Activated T-helper 1 cell treated with anti-CD3 and anti-CD28 coated beads, Interleukin-12 subunit alpha, Interleukin-12 subunit beta, Interleukin-2, Interleukin-4 antibody, amounts not matched to agents 30 ng/mL and 10 ng/mL and 1 ng/mL, durations not matched to agents 14 hours and 24 hours and 36 hours (primary cell): ENCODE measurements at regions of chr2 and their contacts with region 1.

Region 1: GRCh38 chr2:196131384-196131937 is 39.9 kb downstream of the STK17B start:
- DNase-seq: peak; percentile 41
- H3K4me3 Mint-ChIP-seq: no peak overlapping the region
- H3K27ac Mint-ChIP-seq: peak overlapping the region; percentile 78
- H3K4me1 Mint-ChIP-seq: peaks cover 31% of the 10 kb centered on the region
- H3K27me3 Mint-ChIP-seq: peaks cover 3% of the 10 kb centered on the region

Region 2: GRCh38 chr2:196059491-196059960 is 71.9 kb before region 1 on chr2:
- intact Hi-C with region 1: no loop called
- DNase-seq: no peak
- H3K4me3 Mint-ChIP-seq: no peak overlapping the region
- H3K27ac Mint-ChIP-seq: no peak overlapping the region
- H3K4me1 Mint-ChIP-seq: no peaks in the 10 kb centered on the region
- H3K27me3 Mint-ChIP-seq: peaks cover 5% of the 10 kb centered on the region

Region 3: DNA sequence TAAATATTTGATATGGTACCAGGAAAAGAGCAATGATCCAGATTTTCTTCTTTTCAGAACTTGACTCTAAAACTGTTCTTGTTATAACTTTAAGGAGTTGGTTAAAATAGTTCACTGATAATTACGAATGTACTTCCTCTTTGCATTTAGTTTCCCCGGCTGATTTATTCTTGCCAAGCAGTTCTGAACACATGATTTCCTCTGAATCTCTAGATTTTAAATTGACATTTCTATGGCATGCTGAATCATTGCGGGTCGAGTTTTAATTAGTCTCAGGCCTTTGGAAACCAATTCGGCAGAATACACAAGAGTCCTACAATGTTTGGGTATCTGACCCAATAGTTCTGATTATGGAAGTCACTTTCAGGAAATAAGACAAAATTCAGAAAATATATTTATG is 25.5 kb before region 1 on chr2:
- intact Hi-C with region 1: no loop called
- DNase-seq: no peak
- H3K4me3 Mint-ChIP-seq: no peak overlapping the region
- H3K27ac Mint-ChIP-seq: no peak overlapping the region
- H3K4me1 Mint-ChIP-seq: peaks cover 26% of the 10 kb centered on the region
- H3K27me3 Mint-ChIP-seq: peaks cover 2% of the 10 kb centered on the region

Region 4: DNA sequence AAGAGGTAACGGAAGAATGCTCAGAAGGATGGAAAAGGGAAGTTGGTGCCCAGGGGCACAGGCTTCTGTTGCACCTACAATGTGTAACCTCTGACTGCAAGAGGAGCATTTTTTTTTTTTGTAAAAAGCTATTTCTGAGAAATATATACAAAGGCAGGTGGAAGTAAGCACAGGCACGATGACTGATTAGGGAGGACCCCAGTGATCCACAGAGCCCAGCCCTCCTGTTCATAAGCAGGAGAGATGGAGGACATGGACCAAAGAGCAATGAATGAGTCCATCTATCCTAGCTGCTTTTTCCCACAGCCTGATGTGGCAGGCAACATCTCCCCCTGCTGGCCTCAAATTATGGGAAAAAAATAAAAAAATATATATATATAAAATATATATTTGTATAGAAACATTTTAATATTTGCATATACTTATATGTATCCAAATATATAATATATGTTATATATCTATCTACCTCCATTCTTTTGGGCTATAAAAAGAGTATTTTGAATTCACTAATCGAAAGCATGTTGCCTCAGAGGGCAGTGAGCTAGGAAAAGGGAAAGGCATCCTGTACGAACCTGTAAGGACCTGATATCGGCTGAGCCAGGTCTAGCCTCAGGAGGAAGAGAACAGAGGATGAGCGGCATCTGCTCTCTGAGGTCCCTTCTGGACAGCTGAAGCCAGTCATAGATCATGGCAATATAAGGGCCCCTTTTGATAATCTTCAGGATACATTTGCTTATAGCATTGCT is 205.9 kb after region 1 on chr2:
- intact Hi-C with region 1: loop called (anchors 1 kb)
- DNase-seq: no peak
- H3K4me3 Mint-ChIP-seq: no peak overlapping the region
- H3K27ac Mint-ChIP-seq: no peak overlapping the region
- H3K4me1 Mint-ChIP-seq: no peaks in the 10 kb centered on the region
- H3K27me3 Mint-ChIP-seq: peaks cover 10% of the 10 kb centered on the region

Region 5: GRCh38 chr2:196453613-196454047 is 322.2 kb after region 1 on chr2:
- intact Hi-C with region 1: loop called (anchors 2 kb)
- DNase-seq: no peak
- H3K4me3 Mint-ChIP-seq: no peak overlapping the region
- H3K27ac Mint-ChIP-seq: no peak overlapping the region
- H3K4me1 Mint-ChIP-seq: peaks cover 5% of the 10 kb centered on the region
- H3K27me3 Mint-ChIP-seq: peaks cover 31% of the 10 kb centered on the region